MCF 10A (cell line): ENCODE measurements at regions of chr9 and their contacts with region 1.

Region 1: DNA sequence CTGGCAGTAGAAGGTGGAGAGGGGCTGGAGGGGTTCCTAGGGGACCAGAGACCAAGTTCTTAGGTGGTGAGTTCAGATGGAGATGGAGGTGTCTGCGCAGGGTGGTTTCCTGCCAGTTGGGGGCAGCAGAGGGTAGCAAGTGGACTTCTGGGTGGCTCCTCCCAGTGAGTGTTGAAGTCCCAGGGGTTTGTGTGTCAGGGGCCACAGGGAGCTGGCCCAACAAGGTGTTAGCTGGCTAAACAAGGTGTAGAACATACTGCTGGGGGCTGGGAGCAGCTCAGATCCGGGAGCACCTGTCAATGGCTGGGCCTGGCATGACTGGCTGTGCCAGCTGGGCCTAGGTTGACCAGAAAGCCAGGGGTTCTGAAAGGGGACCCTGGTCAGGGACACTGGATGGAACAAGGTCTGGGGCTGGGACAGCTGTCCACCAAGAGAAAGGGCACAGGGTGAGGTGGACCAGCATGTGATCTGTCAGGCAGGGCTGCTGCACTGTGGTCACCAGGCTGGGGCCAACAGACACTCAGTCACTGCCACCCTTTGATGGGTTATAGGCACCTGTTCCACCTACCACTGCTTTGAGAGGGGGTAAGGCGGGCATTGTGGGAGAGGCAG is 35.6 kb downstream of the DAB2IP start:
- DNase-seq: peak; percentile 70
- H3K4me3 Mint-ChIP-seq: no peak overlapping the region
- H3K27ac Mint-ChIP-seq: no peak overlapping the region
- H3K4me1 Mint-ChIP-seq: peaks cover 2% of the 10 kb centered on the region
- H3K27me3 Mint-ChIP-seq: no peaks in the 10 kb centered on the region
- CTCF ChIP-seq: peak; percentile 92

Region 2: DNA sequence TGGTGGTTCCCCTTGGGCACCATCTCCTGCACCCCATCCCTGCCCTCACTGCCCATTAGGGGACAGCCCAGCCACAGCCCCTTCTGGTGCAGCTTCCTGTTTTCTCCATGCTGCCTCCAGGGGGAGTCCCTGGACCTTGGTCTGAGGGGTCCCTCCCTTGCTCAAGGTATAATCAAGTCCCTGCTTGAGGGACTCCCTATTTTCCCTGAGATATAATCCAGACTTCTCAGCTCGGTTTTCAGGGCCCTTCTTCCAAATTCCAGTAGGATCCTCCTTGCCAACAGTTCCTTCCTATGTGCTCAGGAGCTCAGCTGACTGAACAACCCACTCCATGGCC is 66.0 kb before region 1 on chr9:
- CTCF ChIA-PET with region 1: interaction called, 10 read pairs
- POLR2A ChIA-PET with region 1: no interaction called
- intact Hi-C with region 1: no loop called
- DNase-seq: peak; percentile 40
- H3K4me3 Mint-ChIP-seq: no peak overlapping the region
- H3K27ac Mint-ChIP-seq: no peak overlapping the region
- H3K4me1 Mint-ChIP-seq: no peaks in the 10 kb centered on the region
- H3K27me3 Mint-ChIP-seq: no peaks in the 10 kb centered on the region
- CTCF ChIP-seq: peak; percentile 31

Region 3: DNA sequence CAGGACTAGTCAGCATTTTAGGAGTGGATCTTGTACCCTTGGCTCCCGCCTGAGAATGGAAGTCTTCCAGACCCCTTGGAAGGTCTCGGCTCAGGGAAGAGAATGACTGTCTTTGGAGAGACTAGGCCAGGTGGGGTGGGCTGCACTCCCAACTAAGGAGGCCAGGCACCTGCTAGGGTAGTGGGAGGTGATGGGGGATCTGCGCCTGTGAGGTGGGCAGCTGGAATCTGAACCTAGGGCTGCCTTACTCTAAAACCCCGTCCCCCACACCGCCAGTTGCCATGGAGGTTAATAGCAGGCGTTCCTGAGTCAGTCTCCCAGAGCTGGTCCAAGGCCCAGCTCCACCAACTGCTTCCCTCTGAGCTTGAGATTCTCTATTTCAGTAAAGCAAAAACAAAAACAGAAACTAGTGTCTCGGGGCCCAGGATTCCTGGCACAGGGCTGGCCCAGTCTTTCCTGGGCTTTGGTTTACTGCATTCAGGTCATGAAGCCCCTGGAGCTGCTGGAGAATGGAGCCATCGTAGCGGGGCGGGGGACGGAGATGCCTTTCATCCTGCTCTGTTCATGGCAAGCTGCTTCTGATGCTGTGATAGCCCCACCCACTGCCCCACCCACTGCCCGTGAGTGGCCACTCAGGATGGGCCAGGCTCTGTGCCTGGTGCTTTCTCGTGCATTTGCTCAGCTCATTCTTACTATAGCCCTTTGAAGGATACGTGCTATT is 21.9 kb after region 1 on chr9:
- CTCF ChIA-PET with region 1: interaction called, 11 read pairs
- POLR2A ChIA-PET with region 1: no interaction called
- intact Hi-C with region 1: no loop called
- DNase-seq: no peak
- H3K4me3 Mint-ChIP-seq: no peak overlapping the region
- H3K27ac Mint-ChIP-seq: no peak overlapping the region
- H3K4me1 Mint-ChIP-seq: peaks cover 17% of the 10 kb centered on the region
- H3K27me3 Mint-ChIP-seq: no peaks in the 10 kb centered on the region
- CTCF ChIP-seq: no peak

Region 4: DNA sequence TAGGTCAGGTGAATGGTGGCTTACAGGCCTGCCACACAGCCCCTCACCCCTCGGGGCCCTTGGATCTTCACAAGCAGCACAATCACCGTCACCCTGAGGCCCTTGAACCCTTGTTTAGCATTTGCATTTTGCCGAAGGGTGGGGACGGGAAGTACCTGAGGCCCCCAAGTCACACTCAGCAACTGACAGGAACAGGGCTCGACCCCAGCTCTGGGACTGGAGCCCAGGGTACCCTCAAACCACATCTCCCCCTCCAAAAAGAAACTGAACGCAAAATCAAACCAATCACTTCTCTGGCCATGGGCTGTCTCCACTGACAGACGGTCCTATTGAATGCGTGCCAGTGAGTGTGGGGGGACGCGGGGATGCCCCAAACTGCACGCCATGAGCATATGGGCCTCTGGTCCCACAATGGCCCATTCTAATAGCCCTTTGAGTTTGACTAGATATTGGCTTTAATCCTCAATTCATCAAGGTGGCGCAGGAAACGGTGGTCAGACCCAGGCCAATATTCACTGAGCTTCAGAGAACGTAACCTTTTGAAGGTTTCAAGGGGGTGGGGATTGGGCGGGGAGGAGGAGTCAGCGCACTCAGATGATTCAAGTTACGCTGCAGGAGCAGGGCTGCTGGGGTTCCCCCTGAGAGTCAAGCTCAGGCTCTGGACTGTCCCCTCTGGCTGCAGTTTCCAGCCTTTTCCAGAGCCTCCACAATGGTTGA is 140.4 kb after region 1 on chr9:
- CTCF ChIA-PET with region 1: no interaction called
- POLR2A ChIA-PET with region 1: no interaction called
- intact Hi-C with region 1: no loop called
- DNase-seq: no peak
- H3K4me3 Mint-ChIP-seq: no peak overlapping the region
- H3K27ac Mint-ChIP-seq: no peak overlapping the region
- H3K4me1 Mint-ChIP-seq: no peaks in the 10 kb centered on the region
- H3K27me3 Mint-ChIP-seq: no peaks in the 10 kb centered on the region
- CTCF ChIP-seq: no peak

Region 5: GRCh38 chr9:121984726-121985402 is 297.8 kb after region 1 on chr9:
- CTCF ChIA-PET with region 1: interaction called, 24 read pairs
- POLR2A ChIA-PET with region 1: no interaction called
- intact Hi-C with region 1: no loop called
- DNase-seq: no peak
- H3K4me3 Mint-ChIP-seq: no peak overlapping the region
- H3K27ac Mint-ChIP-seq: no peak overlapping the region
- H3K4me1 Mint-ChIP-seq: peaks cover 5% of the 10 kb centered on the region
- H3K27me3 Mint-ChIP-seq: no peaks in the 10 kb centered on the region
- CTCF ChIP-seq: no peak

Region 6: DNA sequence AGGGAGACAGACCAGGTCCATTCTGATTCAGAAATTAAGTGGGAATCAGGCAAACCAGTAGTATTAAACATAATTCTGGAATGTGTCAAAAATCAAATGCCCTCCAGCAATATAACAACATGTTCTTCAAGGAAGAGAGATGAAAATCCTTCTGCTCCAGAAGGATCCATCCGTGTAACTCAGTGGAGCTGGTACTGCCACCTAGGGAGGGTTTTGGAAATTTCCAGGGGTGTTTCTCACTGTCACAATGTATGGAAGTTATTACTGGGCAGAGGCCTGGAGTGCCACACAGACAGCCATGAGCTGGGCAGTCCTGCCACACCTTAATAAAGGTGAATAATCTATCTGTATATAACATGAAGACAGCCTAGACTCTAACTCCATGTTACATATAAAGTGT is 318.6 kb after region 1 on chr9:
- CTCF ChIA-PET with region 1: interaction called, 5 read pairs
- POLR2A ChIA-PET with region 1: no interaction called
- intact Hi-C with region 1: loop called (anchors 5 kb)
- DNase-seq: peak; percentile 60
- H3K4me3 Mint-ChIP-seq: no peak overlapping the region
- H3K27ac Mint-ChIP-seq: no peak overlapping the region
- H3K4me1 Mint-ChIP-seq: no peaks in the 10 kb centered on the region
- H3K27me3 Mint-ChIP-seq: no peaks in the 10 kb centered on the region
- CTCF ChIP-seq: peak; percentile 42

Region 7: DNA sequence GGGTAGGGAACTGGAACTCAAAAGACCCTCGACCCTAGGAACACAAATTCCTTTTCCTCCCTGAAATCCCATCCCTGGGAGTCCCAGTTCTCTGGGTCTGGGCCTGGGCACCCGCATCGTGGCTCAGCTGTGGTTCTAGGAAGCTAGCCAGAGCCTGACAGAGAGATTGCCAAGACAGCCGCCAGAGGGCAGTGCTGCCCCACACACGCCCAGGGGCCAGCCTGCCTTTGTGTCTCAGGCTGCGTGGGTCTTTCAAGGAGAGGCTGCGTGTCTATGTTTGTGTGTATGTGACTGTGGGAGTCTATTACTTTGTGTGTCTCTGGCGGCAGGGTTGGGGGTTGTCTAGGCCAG is 438.1 kb after region 1 on chr9:
- CTCF ChIA-PET with region 1: interaction called, 12 read pairs
- POLR2A ChIA-PET with region 1: no interaction called
- intact Hi-C with region 1: loop called (anchors 10 kb)
- DNase-seq: peak; percentile 79
- H3K4me3 Mint-ChIP-seq: no peak overlapping the region
- H3K27ac Mint-ChIP-seq: no peak overlapping the region
- H3K4me1 Mint-ChIP-seq: peaks cover 18% of the 10 kb centered on the region
- H3K27me3 Mint-ChIP-seq: peaks cover 11% of the 10 kb centered on the region
- CTCF ChIP-seq: peak; percentile 98